Left lung (tissue), 14 donors: ENCODE measurements at regions of chr15 and their contacts with region 1.

Region 1: DNA sequence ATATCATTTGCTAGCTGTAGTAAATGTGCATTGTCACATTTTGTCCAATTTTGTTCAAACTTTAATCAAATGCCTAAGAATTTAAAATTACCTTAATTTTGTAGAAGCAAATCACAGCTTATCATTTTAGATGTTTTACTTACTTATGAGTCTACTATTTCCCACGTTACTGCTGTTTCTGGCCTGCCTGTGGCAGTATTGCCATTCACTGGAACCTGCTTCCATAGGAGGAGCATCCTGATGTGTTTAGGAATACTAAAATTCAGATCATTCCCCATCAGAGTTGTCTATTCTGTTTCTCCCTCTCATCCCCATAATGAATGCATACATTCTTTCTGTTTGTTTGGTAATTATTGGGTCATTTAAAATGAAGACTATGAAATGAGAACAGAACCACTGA is 119.5 kb upstream of the SNRPN start:
- DNase-seq: peak in 1 of 4 donors; percentile 5
- ATAC-seq: no peak
- H3K4me3 ChIP-seq: no peak overlapping the region
- H3K27ac ChIP-seq: no peak overlapping the region
- H3K4me1 ChIP-seq: no peaks in the 10 kb centered on the region
- H3K27me3 ChIP-seq: no peaks in the 10 kb centered on the region
- CTCF ChIP-seq: no peak

Region 2: GRCh38 chr15:24898715-24899272 is 63.5 kb after region 1 on chr15:
- intact Hi-C with region 1: loop called in 1 of 2 experiments (anchors 10 kb)
- DNase-seq: no peak
- ATAC-seq: no peak
- H3K4me3 ChIP-seq: no peak overlapping the region
- H3K27ac ChIP-seq: no peak overlapping the region
- H3K4me1 ChIP-seq: no peaks in the 10 kb centered on the region
- H3K27me3 ChIP-seq: no peaks in the 10 kb centered on the region
- CTCF ChIP-seq: no peak